ENCODE measurements at regions of chr1 and their contacts with region 1.

Region 1: GRCh38 chr1:209747580-209748262 is 8.1 kb upstream of the TRAF3IP3 start:
- DNase-seq: peak; percentile 76
- H3K4me3 ChIP-seq: peak overlapping the region; percentile 39
- H3K27ac ChIP-seq: no peak overlapping the region
- H3K27me3 ChIP-seq: no peaks in the 10 kb centered on the region
- CTCF ChIP-seq: peak; percentile 79

Region 2: GRCh38 chr1:209576798-209577197 is 170.9 kb before region 1 on chr1:
- CTCF ChIA-PET with region 1: interaction called, 34 read pairs
- POLR2A ChIA-PET with region 1: no interaction called
- DNase-seq: peak; percentile 39
- H3K4me3 ChIP-seq: no peak overlapping the region
- H3K27ac ChIP-seq: no peak overlapping the region
- H3K27me3 ChIP-seq: peaks cover 15% of the 10 kb centered on the region
- CTCF ChIP-seq: peak; percentile 97

Region 3: GRCh38 chr1:209585672-209586071 is 162.0 kb before region 1 on chr1:
- CTCF ChIA-PET with region 1: interaction called, 29 read pairs
- POLR2A ChIA-PET with region 1: no interaction called
- DNase-seq: no peak
- H3K4me3 ChIP-seq: peak overlapping the region; percentile 42
- H3K27ac ChIP-seq: no peak overlapping the region
- H3K27me3 ChIP-seq: peaks cover 2% of the 10 kb centered on the region
- CTCF ChIP-seq: no peak

Region 4: DNA sequence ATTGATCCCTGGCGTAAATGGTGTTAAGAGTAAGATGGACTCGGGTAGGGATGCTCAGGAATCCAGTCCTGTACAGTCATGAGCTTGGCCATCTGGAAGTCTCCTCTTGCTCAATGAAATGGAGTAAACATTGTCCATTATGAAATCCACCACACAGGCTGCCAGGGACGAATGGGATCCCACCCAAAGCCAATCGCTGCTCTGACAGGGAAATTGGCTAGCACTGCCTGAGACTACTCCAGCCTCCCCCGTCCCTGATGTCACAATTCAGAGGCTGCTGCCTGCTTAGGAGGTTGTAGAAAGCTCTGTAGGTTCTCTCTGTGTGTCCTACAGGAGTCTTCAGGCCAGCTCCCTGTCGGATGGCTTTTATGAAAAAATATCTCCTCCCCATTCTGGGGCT is 43.1 kb before region 1 on chr1 and contains the start of gene HSD11B1:
- CTCF ChIA-PET with region 1: interaction called, 13 read pairs
- POLR2A ChIA-PET with region 1: interaction called, 3 read pairs
- DNase-seq: peak; percentile 86
- H3K4me3 ChIP-seq: no peak within 1 kb of the TSS
- H3K27ac ChIP-seq: no peak within 1 kb of the TSS
- H3K27me3 ChIP-seq: peaks cover 4% of the 10 kb centered on the region
- CTCF ChIP-seq: no peak
- polyA plus RNA-seq, gene HSD11B1: 4.5 and 4.7 TPM in 2 replicates

Region 5: DNA sequence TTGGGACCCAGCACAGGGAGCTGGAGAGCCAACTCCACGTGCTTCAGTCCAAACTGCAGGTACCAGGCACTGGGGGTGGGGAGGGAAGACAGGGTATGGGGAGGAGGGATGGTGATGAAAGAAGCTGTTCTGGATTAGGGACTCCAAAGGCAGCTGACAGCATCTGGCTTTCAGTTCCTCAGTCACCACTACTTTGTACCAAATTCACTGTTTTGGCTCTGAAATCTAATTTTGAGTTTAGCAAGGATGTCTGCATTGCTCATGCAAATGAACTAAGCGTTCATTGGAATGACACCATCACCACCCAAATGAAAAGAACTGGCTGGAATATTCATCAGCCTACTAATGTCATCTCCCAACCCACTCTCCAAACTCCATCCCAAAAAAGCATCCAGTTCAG is 28.0 kb after region 1 on chr1:
- CTCF ChIA-PET with region 1: interaction called, 11 read pairs
- POLR2A ChIA-PET with region 1: no interaction called
- DNase-seq: no peak
- H3K4me3 ChIP-seq: no peak overlapping the region
- H3K27ac ChIP-seq: no peak overlapping the region
- H3K27me3 ChIP-seq: no peaks in the 10 kb centered on the region
- CTCF ChIP-seq: no peak

Measured in AG04450 (cell line).